A673 (cell line): ENCODE measurements at regions of chr9 and their contacts with region 1.

Region 1: GRCh38 chr9:111298731-111299598 is 31.1 kb downstream of the OR2K2 start:
- DNase-seq: peak; percentile 76
- H3K4me3 ChIP-seq: peak overlapping the region; percentile 13
- H3K27ac ChIP-seq: peak overlapping the region; percentile 10
- H3K4me1 ChIP-seq: peaks cover 9% of the 10 kb centered on the region
- H3K27me3 ChIP-seq: no peaks in the 10 kb centered on the region
- CTCF ChIP-seq: peak; percentile 79

Region 2: DNA sequence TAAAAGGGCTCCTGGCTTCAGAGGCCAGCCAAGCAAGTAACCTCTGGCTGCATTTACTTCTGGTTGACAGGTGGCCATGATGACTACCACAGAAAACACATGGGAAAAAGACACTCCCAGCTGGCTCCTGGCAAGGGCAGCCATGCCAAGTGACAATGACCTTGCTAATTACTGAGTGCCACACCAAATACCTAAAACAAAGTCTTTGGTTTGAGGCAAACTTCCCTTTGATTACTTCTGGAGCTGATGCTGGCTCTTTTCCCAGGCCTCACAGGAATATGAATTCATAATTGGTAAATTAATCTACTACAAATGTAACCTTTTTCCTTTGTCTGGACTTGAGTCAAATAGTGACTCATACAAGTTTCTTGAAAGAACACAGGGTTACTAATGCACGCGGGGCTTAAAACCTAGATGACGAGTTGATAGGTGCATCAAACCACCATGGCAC is 321.7 kb before region 1 on chr9:
- CTCF ChIA-PET with region 1: no interaction called
- POLR2A ChIA-PET with region 1: no interaction called
- intact Hi-C with region 1: loop called (anchors 5 kb)
- DNase-seq: peak; percentile 75
- H3K4me3 ChIP-seq: no peak overlapping the region
- H3K27ac ChIP-seq: peak overlapping the region; percentile 90
- H3K4me1 ChIP-seq: peaks cover 71% of the 10 kb centered on the region
- H3K27me3 ChIP-seq: no peaks in the 10 kb centered on the region
- CTCF ChIP-seq: no peak

Region 3: GRCh38 chr9:111450124-111450523 is 151.2 kb after region 1 on chr9:
- CTCF ChIA-PET with region 1: no interaction called
- POLR2A ChIA-PET with region 1: no interaction called
- intact Hi-C with region 1: no loop called
- DNase-seq: no peak
- H3K4me3 ChIP-seq: no peak overlapping the region
- H3K27ac ChIP-seq: no peak overlapping the region
- H3K4me1 ChIP-seq: peaks cover 10% of the 10 kb centered on the region
- H3K27me3 ChIP-seq: no peaks in the 10 kb centered on the region
- CTCF ChIP-seq: no peak